ENCODE measurements at regions of chr11 and their contacts with region 1.

Region 1: GRCh38 chr11:35391922-35392813 is 27.2 kb downstream of the SLC1A2 start:
- DNase-seq: peak; percentile 84
- H3K4me3 Mint-ChIP-seq: no peak overlapping the region
- H3K27ac Mint-ChIP-seq: no peak overlapping the region
- H3K4me1 Mint-ChIP-seq: peaks cover 19% of the 10 kb centered on the region
- H3K27me3 Mint-ChIP-seq: peaks cover 18% of the 10 kb centered on the region

Region 2: GRCh38 chr11:34916015-34916842 is 475.9 kb before region 1 on chr11 and contains the starts of genes APIP and PDHX:
- CTCF ChIA-PET with region 1: interaction called, 17 read pairs
- POLR2A ChIA-PET with region 1: no interaction called
- DNase-seq: peak; percentile 96
- H3K4me3 Mint-ChIP-seq: peak within 1 kb of the TSS; percentile 81
- H3K27ac Mint-ChIP-seq: peak within 1 kb of the TSS; percentile 76
- H3K4me1 Mint-ChIP-seq: peaks cover 33% of the 10 kb centered on the region
- H3K27me3 Mint-ChIP-seq: no peaks in the 10 kb centered on the region
- total RNA-seq, gene APIP: 21.9 to 25.5 TPM
- total RNA-seq, gene PDHX: 28.0 to 29.7 TPM

Region 3: DNA sequence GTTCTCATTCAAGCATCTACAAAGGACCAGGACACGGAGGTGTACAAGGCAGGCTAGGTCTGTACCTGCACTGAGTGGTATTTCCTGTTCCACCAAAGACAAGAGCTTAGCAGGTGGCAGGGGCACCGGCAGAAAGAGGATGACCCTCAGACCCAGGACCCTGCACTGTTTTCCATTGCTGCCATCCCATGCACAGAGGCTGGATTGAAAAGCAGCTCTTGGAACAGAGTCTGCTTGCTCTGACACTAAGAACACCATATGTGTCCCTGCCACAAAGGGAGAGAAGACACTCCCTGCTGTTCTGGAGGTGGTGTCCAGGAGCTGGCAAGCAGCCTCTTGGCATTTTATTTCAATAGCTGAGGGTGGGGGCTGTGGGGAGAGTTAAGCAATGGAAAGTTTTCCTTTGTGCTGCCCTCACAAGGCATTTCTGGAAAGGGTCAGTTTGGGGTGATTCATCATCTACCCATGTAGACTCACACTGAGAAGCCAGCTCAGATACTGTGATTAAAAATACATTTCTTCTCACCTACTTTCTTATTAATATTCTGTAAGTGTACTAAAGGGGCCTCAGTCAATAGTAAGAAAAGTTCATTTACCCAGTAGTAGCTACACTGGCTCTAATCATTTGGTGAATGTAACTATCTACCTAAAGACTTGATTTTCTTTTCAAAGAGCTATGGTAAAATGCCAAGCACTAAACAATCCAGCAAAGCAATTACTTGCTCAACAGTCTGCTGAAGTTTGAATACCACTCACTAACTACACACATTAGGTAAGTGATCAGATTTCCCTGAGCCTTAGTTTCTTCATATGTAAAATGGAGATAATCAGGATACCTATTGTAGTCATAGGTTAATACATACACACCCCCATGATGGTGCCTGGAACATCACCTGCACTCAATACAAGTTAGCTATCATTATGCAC is 28.1 kb before region 1 on chr11:
- CTCF ChIA-PET with region 1: no interaction called
- POLR2A ChIA-PET with region 1: no interaction called
- DNase-seq: no peak
- H3K4me3 Mint-ChIP-seq: no peak overlapping the region
- H3K27ac Mint-ChIP-seq: no peak overlapping the region
- H3K4me1 Mint-ChIP-seq: no peaks in the 10 kb centered on the region
- H3K27me3 Mint-ChIP-seq: peaks cover 7% of the 10 kb centered on the region